Activated CD8-positive, alpha-beta T cell treated with anti-CD3 and anti-CD28 coated beads, Interleukin-2, amount 10 ng/mL, durations not matched to agents 7 days and 5 days (primary cell): ENCODE measurements at regions of chr11 and their contacts with region 1.

Region 1: DNA sequence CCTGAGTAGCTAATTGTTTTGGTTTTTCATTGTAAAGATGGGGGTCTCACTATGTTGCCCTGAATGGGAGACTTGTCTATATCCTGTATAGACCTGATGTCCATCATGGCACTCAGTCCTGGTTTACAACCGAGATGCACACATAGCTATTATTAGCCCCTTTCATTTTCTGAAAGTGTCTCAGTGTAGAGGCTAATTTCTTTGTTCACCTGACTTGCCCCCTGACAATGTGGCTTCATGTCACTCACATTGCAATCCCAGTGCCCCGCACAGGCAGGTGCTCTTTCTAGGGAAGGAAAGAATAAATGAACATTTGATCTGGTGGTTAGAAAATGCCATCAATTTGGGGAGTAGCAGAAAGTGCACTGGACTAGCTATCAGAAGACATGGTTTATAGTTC is 13.1 kb upstream of the KDM2A start:
- DNase-seq: no peak
- ATAC-seq: no peak
- H3K4me3 Mint-ChIP-seq: no peak overlapping the region
- H3K27ac Mint-ChIP-seq: peak overlapping the region; percentile 43
- H3K4me1 Mint-ChIP-seq: peaks cover 22% of the 10 kb centered on the region
- H3K27me3 Mint-ChIP-seq: no peaks in the 10 kb centered on the region

Region 2: GRCh38 chr11:67118801-67119584 is 13.0 kb after region 1 on chr11 and contains the start of gene KDM2A:
- CTCF ChIA-PET with region 1: interaction called, 5 read pairs
- POLR2A ChIA-PET with region 1: interaction called, 24 read pairs
- DNase-seq: peak; percentile 100
- ATAC-seq: peak; percentile 86
- H3K4me3 Mint-ChIP-seq: peak within 1 kb of the TSS; percentile 99
- H3K27ac Mint-ChIP-seq: peak within 1 kb of the TSS; percentile 96
- H3K4me1 Mint-ChIP-seq: peaks cover 26% of the 10 kb centered on the region
- H3K27me3 Mint-ChIP-seq: peaks cover 2% of the 10 kb centered on the region
- total RNA-seq, gene KDM2A: 90.3 to 93.1 TPM